Gastrocnemius medialis (tissue), 4 donors: ENCODE measurements at regions of chr5 and their contacts with region 1.

Region 1: GRCh38 chr5:7927466-7928375 is 58.8 kb downstream of the MTRR start:
- DNase-seq: no peak
- ATAC-seq: peak in 1 of 2 donors; percentile 71
- H3K4me3 ChIP-seq: no peak overlapping the region
- H3K27ac ChIP-seq: no peak overlapping the region
- H3K4me1 ChIP-seq: no peaks in the 10 kb centered on the region
- H3K27me3 ChIP-seq: no peaks in the 10 kb centered on the region
- CTCF ChIP-seq: peak in 4 of 5 experiments; percentile 33 to 64 (median 50)
- POLR2A ChIP-seq: no peak

Region 2: GRCh38 chr5:8048920-8049319 is 121.2 kb after region 1 on chr5:
- in situ Hi-C with region 1: no loop called
- intact Hi-C with region 1: no loop called
- DNase-seq: no peak
- ATAC-seq: no peak
- H3K4me3 ChIP-seq: no peak overlapping the region
- H3K27ac ChIP-seq: no peak overlapping the region
- H3K4me1 ChIP-seq: no peaks in the 10 kb centered on the region
- H3K27me3 ChIP-seq: no peaks in the 10 kb centered on the region
- CTCF ChIP-seq: no peak
- POLR2A ChIP-seq: no peak

Region 3: GRCh38 chr5:8184455-8185063 is 256.8 kb after region 1 on chr5:
- in situ Hi-C with region 1: no loop called
- intact Hi-C with region 1: no loop called
- DNase-seq: no peak
- ATAC-seq: no peak
- H3K4me3 ChIP-seq: no peak overlapping the region
- H3K27ac ChIP-seq: no peak overlapping the region
- H3K4me1 ChIP-seq: no peaks in the 10 kb centered on the region
- H3K27me3 ChIP-seq: no peaks in the 10 kb centered on the region
- CTCF ChIP-seq: peak in 2 of 5 experiments; percentile 30 to 54
- POLR2A ChIP-seq: no peak

Region 4: GRCh38 chr5:8213701-8214240 is 286.1 kb after region 1 on chr5:
- in situ Hi-C with region 1: no loop called
- intact Hi-C with region 1: no loop called
- DNase-seq: no peak
- ATAC-seq: no peak
- H3K4me3 ChIP-seq: no peak overlapping the region
- H3K27ac ChIP-seq: no peak overlapping the region
- H3K4me1 ChIP-seq: no peaks in the 10 kb centered on the region
- H3K27me3 ChIP-seq: no peaks in the 10 kb centered on the region
- CTCF ChIP-seq: no peak
- POLR2A ChIP-seq: no peak

Region 5: DNA sequence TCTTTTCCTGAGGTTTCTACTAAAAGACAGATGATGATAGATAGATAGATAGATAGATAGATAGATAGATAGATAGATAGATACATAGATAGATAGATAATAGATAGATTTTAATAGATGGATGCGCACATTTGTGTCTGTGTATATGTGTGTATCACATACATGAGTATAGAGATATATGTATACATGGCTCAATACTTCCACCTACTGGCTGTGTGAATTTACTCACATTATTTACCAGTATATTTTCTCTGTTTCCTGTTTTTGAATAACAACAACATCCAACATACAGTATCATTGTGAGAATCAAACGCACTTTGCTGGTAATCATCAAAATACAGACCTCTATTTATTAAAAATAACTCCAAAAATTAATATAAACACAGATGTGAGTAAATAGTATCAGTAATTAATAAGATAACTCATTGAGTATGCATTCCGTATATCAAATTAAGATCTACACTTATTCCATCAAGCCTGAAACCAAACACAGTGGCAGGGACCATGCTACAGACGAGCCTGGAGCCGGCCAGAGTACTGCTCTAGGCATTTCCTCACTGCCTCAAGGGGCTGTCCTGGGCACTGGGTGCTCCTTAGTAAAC is 1280.2 kb after region 1 on chr5:
- in situ Hi-C with region 1: no loop called
- intact Hi-C with region 1: loop called (anchors 5 kb)
- DNase-seq: no peak
- ATAC-seq: no peak
- H3K4me3 ChIP-seq: no peak overlapping the region
- H3K27ac ChIP-seq: no peak overlapping the region
- H3K4me1 ChIP-seq: no peaks in the 10 kb centered on the region
- H3K27me3 ChIP-seq: no peaks in the 10 kb centered on the region
- CTCF ChIP-seq: peak in 3 of 5 experiments; percentile 8 to 34 (median 14)
- POLR2A ChIP-seq: no peak